Activated naive CD4-positive, alpha-beta T cell treated with anti-CD3 and anti-CD28 coated beads for 36 hours (primary cell): ENCODE measurements at regions of chr1 and their contacts with region 1.

Region 1: DNA sequence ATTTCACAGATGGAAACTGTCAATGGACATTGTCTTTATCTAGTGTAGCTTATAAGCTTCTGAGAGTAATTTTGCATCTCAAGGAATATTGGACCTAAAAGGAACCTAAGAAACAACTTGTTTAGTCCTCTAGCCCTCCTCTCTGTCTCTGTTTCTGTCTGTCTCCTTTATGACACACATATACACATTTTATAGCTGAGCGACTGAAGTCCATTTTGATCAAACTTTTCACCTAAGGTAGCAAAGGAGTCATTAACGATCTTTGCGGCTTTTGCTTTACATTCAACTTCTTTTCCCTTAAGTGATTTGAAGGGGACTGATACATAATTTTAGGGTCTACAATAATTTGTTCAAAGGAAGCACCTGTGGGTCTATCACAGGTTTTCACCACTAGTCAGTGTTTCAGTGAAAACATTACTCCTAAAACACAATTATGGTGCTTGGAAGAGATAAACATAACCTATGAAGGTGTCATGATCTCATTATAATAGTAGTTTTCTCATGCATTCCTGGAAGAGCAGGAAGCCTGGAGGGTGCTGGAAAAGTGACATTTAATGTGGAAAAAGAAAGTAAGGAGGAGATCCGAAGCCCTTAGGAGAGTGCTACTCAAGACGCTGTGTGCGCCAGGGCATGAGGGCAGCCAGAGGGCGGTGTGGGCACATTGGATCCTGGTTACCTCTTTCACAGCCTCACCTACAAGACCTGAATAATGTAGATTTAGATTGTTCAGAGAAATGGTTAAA is 248.6 kb downstream of the DNM3 start:
- DNase-seq: peak; percentile 83
- H3K4me3 Mint-ChIP-seq: no peak overlapping the region
- H3K27ac Mint-ChIP-seq: no peak overlapping the region
- H3K4me1 Mint-ChIP-seq: peaks cover 2% of the 10 kb centered on the region
- H3K27me3 Mint-ChIP-seq: no peaks in the 10 kb centered on the region

Region 2: DNA sequence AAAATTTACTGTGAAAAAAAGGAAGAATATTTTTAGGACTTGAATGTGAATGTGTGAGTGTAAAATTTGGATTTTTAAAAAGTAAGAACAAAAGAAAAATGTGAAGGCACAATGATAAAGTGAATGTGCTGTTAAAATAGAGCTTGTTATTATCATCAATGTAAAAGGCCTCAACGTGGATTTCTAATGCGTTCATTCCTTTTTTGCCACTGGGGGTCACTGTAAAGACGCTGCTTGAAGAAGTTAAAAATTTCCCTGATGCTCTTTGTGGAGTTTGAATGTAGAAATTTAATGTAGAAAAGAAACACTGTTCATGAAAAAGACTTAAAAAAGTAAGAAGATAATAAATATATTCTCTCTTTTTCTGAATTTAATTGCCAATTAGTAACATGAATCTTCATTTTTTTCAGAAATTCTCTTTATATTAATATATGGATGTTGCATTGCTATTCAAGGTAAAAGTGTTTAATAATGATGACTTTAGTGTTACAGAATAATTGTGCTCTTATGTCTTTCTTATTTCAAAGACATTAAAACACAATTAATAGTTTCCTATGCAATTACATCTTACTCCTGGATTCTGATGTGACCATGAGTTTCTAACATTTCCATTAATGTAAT is 87.1 kb before region 1 on chr1:
- CTCF ChIA-PET with region 1: no interaction called
- intact Hi-C with region 1: loop called (anchors 1 kb)
- DNase-seq: peak; percentile 39
- H3K4me3 Mint-ChIP-seq: no peak overlapping the region
- H3K27ac Mint-ChIP-seq: no peak overlapping the region
- H3K4me1 Mint-ChIP-seq: peaks cover 4% of the 10 kb centered on the region
- H3K27me3 Mint-ChIP-seq: no peaks in the 10 kb centered on the region

Region 3: DNA sequence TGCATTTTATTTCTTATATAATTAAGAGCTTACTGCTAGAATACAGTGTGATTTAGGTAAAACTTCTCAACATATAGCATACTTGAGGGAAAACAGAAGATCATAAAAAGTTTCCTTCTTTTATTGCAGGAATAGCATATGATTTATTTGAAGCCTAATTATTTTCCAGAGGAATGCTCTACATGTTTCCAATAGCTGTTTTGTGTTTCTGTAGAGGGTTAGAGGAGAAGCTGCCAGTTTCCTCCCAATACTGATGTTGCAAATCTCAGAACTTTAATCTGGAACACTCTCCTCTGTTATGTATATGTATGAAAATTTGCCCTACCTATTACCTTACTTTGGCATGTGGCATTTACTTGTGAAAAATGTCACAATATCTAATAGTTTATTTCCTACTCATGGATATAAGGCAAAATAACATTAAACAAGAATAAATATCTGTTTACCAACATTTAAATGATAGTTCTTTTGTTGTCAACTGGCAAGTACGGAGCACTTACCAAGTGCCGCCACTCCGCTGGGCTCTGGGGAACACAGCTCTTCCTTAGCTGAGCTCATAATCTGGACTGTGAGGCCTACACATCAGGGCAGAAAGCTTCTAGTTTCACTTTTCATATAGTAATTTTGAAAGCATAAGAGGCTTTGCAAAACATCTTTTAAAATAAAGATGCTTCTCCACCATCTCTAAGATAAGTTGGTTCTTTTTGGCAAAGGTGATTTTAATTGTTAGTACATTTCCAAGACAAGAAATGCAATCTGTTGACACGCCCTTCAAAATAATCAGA is 90.8 kb after region 1 on chr1:
- CTCF ChIA-PET with region 1: interaction called, 4 read pairs
- intact Hi-C with region 1: loop called (anchors 1 kb)
- DNase-seq: peak; percentile 63
- H3K4me3 Mint-ChIP-seq: peak overlapping the region; percentile 67
- H3K27ac Mint-ChIP-seq: peak overlapping the region; percentile 89
- H3K4me1 Mint-ChIP-seq: peaks cover 40% of the 10 kb centered on the region
- H3K27me3 Mint-ChIP-seq: no peaks in the 10 kb centered on the region

Region 4: DNA sequence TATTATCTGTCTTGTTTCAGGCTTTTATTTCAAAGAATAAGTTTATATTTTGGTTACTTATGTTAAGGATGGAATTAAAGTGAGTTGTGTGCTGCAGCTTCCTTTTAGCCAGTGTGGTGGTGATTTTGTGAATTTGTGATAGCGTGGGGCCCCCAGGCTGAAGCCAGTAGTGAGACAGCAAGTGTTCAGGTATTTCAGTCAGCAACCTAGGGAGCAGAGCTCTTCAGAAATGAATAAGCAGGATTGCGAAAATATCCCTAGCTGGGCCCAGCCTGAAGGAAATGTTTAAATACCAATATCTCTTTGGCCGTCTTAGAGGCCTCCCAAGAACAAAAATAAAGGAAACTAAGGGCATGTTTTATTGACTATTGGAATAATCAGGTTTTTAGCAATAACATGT is 179.7 kb after region 1 on chr1:
- CTCF ChIA-PET with region 1: no interaction called
- intact Hi-C with region 1: loop called (anchors 2 kb)
- DNase-seq: no peak
- H3K4me3 Mint-ChIP-seq: no peak overlapping the region
- H3K27ac Mint-ChIP-seq: peak overlapping the region; percentile 41
- H3K4me1 Mint-ChIP-seq: peaks cover 41% of the 10 kb centered on the region
- H3K27me3 Mint-ChIP-seq: no peaks in the 10 kb centered on the region

Region 5: GRCh38 chr1:172417552-172417951 is 327.6 kb after region 1 on chr1:
- CTCF ChIA-PET with region 1: interaction called, 10 read pairs
- intact Hi-C with region 1: no loop called
- DNase-seq: no peak
- H3K4me3 Mint-ChIP-seq: no peak overlapping the region
- H3K27ac Mint-ChIP-seq: no peak overlapping the region
- H3K4me1 Mint-ChIP-seq: peaks cover 17% of the 10 kb centered on the region
- H3K27me3 Mint-ChIP-seq: no peaks in the 10 kb centered on the region

Region 6: DNA sequence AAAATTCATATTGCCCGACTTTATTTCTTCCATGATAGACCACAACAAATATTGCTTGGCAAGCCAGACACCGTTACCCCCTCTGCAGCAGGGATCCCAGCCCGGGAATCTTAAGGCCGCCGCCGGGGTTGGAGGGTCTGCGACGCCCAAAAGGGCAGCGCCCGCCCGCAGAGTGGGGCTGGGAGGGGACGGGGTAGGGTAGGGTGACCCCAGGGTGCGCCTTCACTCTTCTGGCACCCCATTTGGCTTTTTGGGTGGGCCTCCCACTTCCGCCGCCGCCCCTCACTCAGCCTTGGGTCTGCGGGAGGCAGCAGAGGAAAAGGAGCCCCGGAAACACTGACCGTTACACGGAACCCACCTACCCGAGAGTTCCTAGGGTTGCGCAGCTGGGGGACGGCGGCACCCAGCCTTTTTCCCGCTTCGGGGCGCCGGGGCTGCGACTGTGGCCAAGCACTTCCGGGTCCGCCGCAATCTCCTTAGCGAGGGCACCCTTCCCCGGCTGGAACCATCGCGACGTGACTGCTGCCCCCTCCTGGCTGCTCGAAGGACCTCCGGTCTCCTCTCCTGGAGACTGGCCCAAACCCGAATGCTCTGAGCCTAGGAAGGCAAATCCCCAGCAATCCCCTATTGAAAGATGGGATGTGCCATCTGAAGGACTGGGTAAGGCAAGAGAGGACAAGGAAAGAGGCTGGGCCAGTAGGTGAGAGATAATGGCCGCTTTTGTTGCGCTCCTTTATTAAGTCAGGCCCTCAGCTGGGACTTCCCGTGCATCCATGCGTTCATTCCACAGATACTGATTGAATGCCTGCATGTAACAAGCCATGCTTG is 353.9 kb after region 1 on chr1 and contains the start of gene PIGC:
- CTCF ChIA-PET with region 1: interaction called, 21 read pairs
- intact Hi-C with region 1: loop called (anchors 1 kb)
- DNase-seq: peak; percentile 96
- H3K4me3 Mint-ChIP-seq: peak within 1 kb of the TSS; percentile 86
- H3K27ac Mint-ChIP-seq: peak within 1 kb of the TSS; percentile 86
- H3K4me1 Mint-ChIP-seq: peaks cover 35% of the 10 kb centered on the region
- H3K27me3 Mint-ChIP-seq: no peaks in the 10 kb centered on the region
- total RNA-seq, gene PIGC: 17.5 to 18.7 TPM